HCT116 (cell line): ENCODE measurements at regions of chr12 and their contacts with region 1.

Region 1: GRCh38 chr12:16385782-16386646 is 38.6 kb downstream of the MGST1 start:
- DNase-seq: no peak
- ATAC-seq: peak; percentile 64
- H3K4me3 ChIP-seq: no peak overlapping the region
- H3K27ac ChIP-seq: no peak overlapping the region
- H3K4me1 ChIP-seq: peaks cover 0 to 5% of the 10 kb centered on the region in 2 experiments; a peak in 2 of 4 replicates
- H3K27me3 ChIP-seq: no peaks in the 10 kb centered on the region
- CTCF ChIP-seq: peak; percentile 24 to 46 (median 30); a peak in 4 of 6 replicates
- POLR2A ChIP-seq: no peak
- RAD21 ChIP-seq: peak; percentile 60

Region 2: DNA sequence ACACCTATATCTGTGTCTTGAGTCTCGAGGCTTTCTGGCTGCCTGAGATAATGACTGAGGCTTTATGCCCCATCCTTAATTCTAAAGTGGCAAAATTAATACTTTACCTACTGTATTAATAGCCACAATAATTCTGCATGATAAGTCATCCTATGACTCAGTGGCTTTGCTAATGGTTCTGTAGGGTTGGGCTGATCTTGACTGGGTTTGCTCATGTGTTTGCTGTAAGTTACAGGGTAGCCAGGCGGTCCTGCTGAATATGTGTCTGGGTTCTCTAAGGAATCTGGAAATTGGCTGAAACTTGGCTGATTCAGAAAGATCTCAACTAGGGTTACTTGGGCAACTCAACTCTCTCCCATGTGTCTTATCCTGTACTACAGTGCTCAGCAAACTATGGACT is 16.9 kb before region 1 on chr12:
- CTCF ChIA-PET with region 1: no interaction called
- POLR2A ChIA-PET with region 1: no interaction called
- RAD21 ChIA-PET with region 1: no interaction called
- intact Hi-C with region 1: no loop called
- DNase-seq: no peak
- ATAC-seq: no peak
- H3K4me3 ChIP-seq: no peak overlapping the region
- H3K27ac ChIP-seq: no peak overlapping the region
- H3K4me1 ChIP-seq: no peaks in the 10 kb centered on the region
- H3K27me3 ChIP-seq: no peaks in the 10 kb centered on the region
- CTCF ChIP-seq: no peak
- POLR2A ChIP-seq: no peak
- RAD21 ChIP-seq: no peak

Region 3: DNA sequence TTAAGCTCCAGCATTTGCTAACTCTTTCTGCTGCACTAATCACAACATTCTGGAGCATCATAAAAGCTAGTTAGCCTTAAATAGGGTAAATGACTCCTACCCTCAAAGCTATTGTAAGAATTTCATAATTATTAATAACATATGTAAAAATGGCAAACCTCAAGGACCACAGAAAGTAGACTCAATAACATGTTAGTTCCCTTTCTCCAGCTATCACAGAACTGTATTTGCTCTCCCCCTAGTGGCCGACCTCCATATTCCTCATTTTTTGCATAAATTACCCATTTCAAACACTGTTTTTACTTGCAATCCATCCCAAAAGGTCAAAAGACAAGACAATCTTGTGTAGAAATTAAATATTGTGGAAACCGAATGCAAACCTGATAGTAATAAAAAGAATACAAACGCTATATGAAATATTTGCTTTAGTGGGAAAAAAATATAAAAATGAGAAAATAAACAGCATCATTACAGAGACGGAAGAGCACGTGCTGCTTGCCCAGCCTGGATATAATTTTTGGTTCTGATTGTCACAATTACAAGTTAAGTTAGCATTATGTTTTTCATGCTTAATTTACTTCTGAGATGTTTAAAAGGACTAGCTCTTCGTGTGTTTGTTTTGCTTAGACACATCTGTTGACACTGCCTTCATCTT is 1606.1 kb after region 1 on chr12:
- CTCF ChIA-PET with region 1: no interaction called
- POLR2A ChIA-PET with region 1: no interaction called
- RAD21 ChIA-PET with region 1: no interaction called
- intact Hi-C with region 1: loop called (anchors 5 kb)
- DNase-seq: peak; percentile 28
- ATAC-seq: peak; percentile 42; the same call in 1 of the 2 replicates
- H3K4me3 ChIP-seq: no peak overlapping the region
- H3K27ac ChIP-seq: no peak overlapping the region
- H3K4me1 ChIP-seq: no peaks in the 10 kb centered on the region
- H3K27me3 ChIP-seq: no peaks in the 10 kb centered on the region
- CTCF ChIP-seq: peak; percentile 31 to 77 (median 59); a peak in 5 of 6 replicates
- POLR2A ChIP-seq: no peak
- RAD21 ChIP-seq: peak; percentile 56